CD4-positive, alpha-beta T cell (primary cell): ENCODE measurements at regions of chr1 and their contacts with region 1.

Region 1: DNA sequence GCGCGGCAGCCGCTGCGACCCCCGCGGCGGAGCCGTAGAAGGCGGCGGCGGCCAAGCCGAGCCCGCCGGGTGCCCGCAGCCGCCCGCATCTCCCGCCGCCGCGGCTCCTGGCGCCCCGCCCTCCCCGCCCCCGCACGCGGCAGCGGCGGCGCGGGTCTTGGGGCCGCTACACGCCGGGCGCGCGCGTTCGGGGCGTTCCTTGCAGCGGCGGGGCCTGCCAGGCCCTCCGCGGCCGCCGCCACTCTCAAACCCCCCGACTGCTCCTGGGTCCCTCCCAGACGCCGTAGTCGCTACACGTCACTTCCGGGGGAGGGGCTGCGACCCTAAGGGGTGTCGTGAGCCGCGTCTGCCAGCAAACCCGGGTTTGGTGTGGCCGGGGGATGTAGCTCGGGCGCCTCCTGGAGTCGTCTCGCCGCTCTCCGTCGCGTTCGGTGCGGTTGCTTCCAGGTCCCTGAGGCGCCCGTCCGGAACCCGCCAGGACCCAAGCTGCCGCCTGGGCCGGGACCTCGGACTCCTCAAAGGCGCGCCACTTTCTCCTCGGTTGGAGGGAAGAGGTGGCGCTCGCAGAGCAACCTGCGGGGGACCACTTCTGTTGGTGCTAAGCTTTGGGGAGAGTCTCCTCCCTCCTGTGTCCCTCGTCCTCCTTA is at the start of gene ELK4:
- DNase-seq: peak; percentile 99 to 100 (median 100)
- ATAC-seq: peak; percentile 79
- H3K4me3 ChIP-seq: peak within 1 kb of the TSS; percentile 81
- H3K4me3 Mint-ChIP-seq: peak within 1 kb of the TSS; percentile 94
- H3K27ac ChIP-seq: peak within 1 kb of the TSS; percentile 91 to 93
- H3K27ac Mint-ChIP-seq: peak within 1 kb of the TSS; percentile 91
- H3K4me1 ChIP-seq: peaks cover 29% of the 10 kb centered on the region
- H3K4me1 Mint-ChIP-seq: peaks cover 50% of the 10 kb centered on the region
- H3K27me3 ChIP-seq: no peaks in the 10 kb centered on the region
- H3K27me3 Mint-ChIP-seq: no peaks in the 10 kb centered on the region
- CTCF ChIP-seq: peak; percentile 75
- total RNA-seq, gene ELK4: 145 to 154 TPM

Region 2: GRCh38 chr1:205211169-205211838 is 420.5 kb before region 1 on chr1 and contains the start of gene DSTYK:
- CTCF ChIA-PET with region 1: no interaction called
- POLR2A ChIA-PET with region 1: no interaction called
- intact Hi-C with region 1: loop called in 1 of 2 experiments (anchors 10 kb)
- DNase-seq: peak; percentile 84 to 95 (median 88)
- ATAC-seq: peak; percentile 92
- H3K4me3 ChIP-seq: peak within 1 kb of the TSS; percentile 99
- H3K4me3 Mint-ChIP-seq: peak within 1 kb of the TSS; percentile 98
- H3K27ac ChIP-seq: peak within 1 kb of the TSS; percentile 67 to 80
- H3K27ac Mint-ChIP-seq: peak within 1 kb of the TSS; percentile 98
- H3K4me1 ChIP-seq: peaks cover 19% of the 10 kb centered on the region
- H3K4me1 Mint-ChIP-seq: peaks cover 57% of the 10 kb centered on the region
- H3K27me3 ChIP-seq: no peaks in the 10 kb centered on the region
- H3K27me3 Mint-ChIP-seq: peaks cover 5% of the 10 kb centered on the region
- CTCF ChIP-seq: no peak
- total RNA-seq, gene DSTYK: 13.9 to 15.3 TPM

Region 3: DNA sequence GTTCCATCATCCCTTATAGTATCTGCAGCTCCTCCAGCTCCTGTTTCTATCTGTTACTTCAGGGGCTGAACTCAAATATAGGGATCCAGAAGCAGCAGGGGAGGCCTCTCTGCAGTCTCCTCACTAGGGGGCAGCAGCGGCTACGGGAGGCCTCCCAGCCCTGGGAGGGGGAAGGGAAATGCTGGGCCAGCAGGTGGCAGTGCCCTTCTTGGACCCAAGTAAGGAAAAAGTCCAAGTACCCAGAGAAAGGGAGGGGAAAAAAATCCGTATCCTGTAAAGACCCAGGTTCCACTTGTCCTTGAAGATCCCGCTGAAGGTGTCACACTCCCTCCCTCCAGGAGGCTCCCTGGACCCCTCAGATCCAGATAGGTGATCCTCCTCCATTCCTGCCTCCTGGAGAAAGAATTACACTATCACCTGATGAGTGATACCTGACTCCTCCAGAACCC is 296.2 kb before region 1 on chr1:
- CTCF ChIA-PET with region 1: no interaction called
- POLR2A ChIA-PET with region 1: no interaction called
- intact Hi-C with region 1: loop called in 1 of 2 experiments (anchors 10 kb)
- DNase-seq: peak; percentile 63 to 89 (median 74)
- ATAC-seq: peak; percentile 99
- H3K4me3 ChIP-seq: no peak overlapping the region
- H3K4me3 Mint-ChIP-seq: no peak overlapping the region
- H3K27ac ChIP-seq: no peak overlapping the region
- H3K27ac Mint-ChIP-seq: no peak overlapping the region
- H3K4me1 ChIP-seq: no peaks in the 10 kb centered on the region
- H3K4me1 Mint-ChIP-seq: no peaks in the 10 kb centered on the region
- H3K27me3 ChIP-seq: no peaks in the 10 kb centered on the region
- H3K27me3 Mint-ChIP-seq: no peaks in the 10 kb centered on the region
- CTCF ChIP-seq: peak; percentile 93

Region 4: GRCh38 chr1:205591522-205592351 is 40.1 kb before region 1 on chr1:
- CTCF ChIA-PET with region 1: interaction called, 194 read pairs
- POLR2A ChIA-PET with region 1: interaction called, 360 read pairs
- intact Hi-C with region 1: loop called (anchors 1 kb)
- DNase-seq: peak; percentile 81 to 94 (median 88)
- ATAC-seq: peak; percentile 85
- H3K4me3 ChIP-seq: peak overlapping the region; percentile 50
- H3K4me3 Mint-ChIP-seq: peak overlapping the region; percentile 90
- H3K27ac ChIP-seq: peak overlapping the region; percentile 23 to 45
- H3K27ac Mint-ChIP-seq: peak overlapping the region; percentile 99
- H3K4me1 ChIP-seq: peaks cover 31% of the 10 kb centered on the region
- H3K4me1 Mint-ChIP-seq: peaks cover 50% of the 10 kb centered on the region
- H3K27me3 ChIP-seq: no peaks in the 10 kb centered on the region
- H3K27me3 Mint-ChIP-seq: no peaks in the 10 kb centered on the region
- CTCF ChIP-seq: peak; percentile 96

Region 5: DNA sequence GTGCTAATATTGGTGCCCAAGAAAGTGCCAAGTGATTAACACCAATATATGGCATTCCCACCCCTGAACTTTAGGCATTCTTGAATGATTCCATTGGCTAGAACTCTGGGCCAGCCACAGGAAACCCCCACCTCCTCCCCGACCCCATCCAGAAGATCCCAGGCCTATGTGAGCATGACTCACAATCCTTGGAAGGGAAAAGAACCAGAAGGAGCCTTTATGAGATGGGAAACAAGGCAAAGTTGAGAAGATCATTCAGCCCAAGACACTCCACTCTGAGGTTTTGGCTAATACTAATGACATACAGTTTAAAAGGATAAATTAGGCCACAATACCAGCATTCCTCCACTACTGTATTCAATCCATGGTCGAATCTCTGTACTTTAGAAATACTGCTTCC is 21.8 kb before region 1 on chr1:
- CTCF ChIA-PET with region 1: interaction called, 5 read pairs
- POLR2A ChIA-PET with region 1: interaction called, 13 read pairs
- intact Hi-C with region 1: loop called in 1 of 2 experiments (anchors 2 kb)
- DNase-seq: no peak
- ATAC-seq: no peak
- H3K4me3 ChIP-seq: no peak overlapping the region
- H3K4me3 Mint-ChIP-seq: no peak overlapping the region
- H3K27ac ChIP-seq: no peak overlapping the region
- H3K27ac Mint-ChIP-seq: peak overlapping the region; percentile 64
- H3K4me1 ChIP-seq: peaks cover 3% of the 10 kb centered on the region
- H3K4me1 Mint-ChIP-seq: peaks cover 61% of the 10 kb centered on the region
- H3K27me3 ChIP-seq: no peaks in the 10 kb centered on the region
- H3K27me3 Mint-ChIP-seq: no peaks in the 10 kb centered on the region
- CTCF ChIP-seq: no peak

Region 6: DNA sequence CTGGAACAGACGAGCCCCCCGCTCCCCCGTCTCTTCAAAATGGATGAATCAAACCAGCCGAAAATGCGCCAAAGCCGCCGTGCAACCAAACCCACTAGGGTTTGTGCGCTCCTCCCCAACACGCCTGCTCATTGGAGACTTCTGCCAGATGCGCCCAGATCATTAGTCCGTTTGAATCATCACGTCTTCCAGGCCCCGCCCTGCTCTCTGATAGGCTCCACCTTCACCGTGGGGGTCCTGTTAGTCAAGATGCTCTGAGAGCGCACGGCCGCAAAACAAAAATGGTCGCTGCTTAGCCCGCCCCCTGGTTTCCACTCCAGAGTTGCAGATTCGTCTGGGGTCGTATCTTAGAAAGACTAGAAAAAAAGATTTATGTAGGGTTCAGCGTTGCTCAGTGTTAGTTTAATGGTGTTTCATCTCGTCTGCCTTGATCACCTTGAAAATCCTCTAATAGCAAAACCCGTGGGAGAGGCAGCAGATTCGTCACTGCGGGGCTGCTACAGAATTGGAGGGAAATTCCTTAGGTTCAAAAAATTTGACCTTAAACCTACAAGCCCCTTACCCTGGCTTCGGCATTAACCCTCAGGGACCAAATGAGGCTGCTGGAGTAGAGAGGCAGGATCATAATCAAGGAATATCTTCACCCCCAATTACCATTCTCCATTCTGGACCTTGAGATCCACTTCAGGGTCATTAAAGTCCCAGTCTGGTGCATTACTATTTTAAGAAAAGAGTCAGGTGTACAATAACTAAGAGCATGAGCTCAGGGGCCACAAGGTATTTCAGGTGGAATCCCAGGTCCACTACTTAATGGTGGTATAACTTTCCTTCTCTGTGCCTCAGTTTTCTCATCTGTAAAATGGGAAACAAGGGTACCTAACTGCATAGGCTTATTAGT is 118.5 kb after region 1 on chr1 and contains the start of gene NUCKS1:
- CTCF ChIA-PET with region 1: no interaction called
- POLR2A ChIA-PET with region 1: interaction called, 29 read pairs
- intact Hi-C with region 1: loop called in 1 of 2 experiments (anchors 5 kb)
- DNase-seq: peak; percentile 93 to 99 (median 96)
- ATAC-seq: peak; percentile 79
- H3K4me3 ChIP-seq: peak within 1 kb of the TSS; percentile 71
- H3K4me3 Mint-ChIP-seq: peak within 1 kb of the TSS; percentile 99
- H3K27ac ChIP-seq: peak within 1 kb of the TSS; percentile 75 to 80
- H3K27ac Mint-ChIP-seq: peak within 1 kb of the TSS; percentile 93
- H3K4me1 ChIP-seq: peaks cover 8% of the 10 kb centered on the region
- H3K4me1 Mint-ChIP-seq: peaks cover 39% of the 10 kb centered on the region
- H3K27me3 ChIP-seq: no peaks in the 10 kb centered on the region
- H3K27me3 Mint-ChIP-seq: no peaks in the 10 kb centered on the region
- CTCF ChIP-seq: no peak
- total RNA-seq, gene NUCKS1: 80.6 to 84.7 TPM

Region 7: DNA sequence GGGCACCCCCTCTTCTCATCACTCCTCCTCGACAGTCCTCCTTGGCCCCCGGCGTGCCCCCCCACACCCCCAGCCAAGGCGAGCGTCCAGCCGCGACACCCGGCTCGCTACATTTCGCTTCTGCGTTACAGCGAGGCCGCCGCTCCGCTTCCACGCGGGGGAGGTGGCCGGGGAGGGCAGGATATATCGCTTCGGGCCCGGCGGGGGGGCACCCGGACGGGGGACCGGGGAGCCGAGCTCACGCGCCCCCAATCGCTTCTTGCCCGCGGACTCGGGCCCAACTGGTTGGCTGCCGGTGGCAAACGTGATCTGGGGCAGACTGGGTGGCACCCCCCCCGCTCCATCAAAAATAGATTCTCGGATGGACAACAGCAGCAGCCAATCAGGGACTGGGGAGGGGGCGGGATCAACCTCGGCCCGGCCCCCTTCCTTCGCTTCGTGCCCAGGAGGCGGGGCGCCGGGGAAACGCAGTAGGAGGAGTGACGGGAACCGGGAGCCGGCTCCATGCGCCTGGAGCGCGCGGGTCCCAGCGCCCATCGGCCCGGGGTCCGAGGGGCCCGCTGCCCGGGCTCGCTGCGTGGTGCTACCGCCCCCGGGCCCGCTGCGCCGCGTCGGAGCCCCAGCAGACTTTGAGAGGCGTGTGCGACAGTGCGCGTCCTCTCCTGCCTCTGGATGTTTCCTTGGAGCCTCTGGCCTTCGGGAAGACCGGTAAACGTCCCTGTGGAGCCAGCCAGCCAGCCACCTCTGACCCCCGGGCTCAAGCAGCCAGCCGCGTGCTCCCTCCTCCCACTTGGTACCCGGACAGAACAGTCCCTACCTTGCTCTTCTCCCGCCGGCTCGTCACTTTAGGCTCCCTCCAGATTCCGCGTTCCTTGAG is 181.3 kb after region 1 on chr1 and contains the start of gene SLC41A1:
- CTCF ChIA-PET with region 1: no interaction called
- POLR2A ChIA-PET with region 1: no interaction called
- intact Hi-C with region 1: loop called in 1 of 2 experiments (anchors 2 kb)
- DNase-seq: peak; percentile 85 to 97 (median 90)
- ATAC-seq: peak; percentile 95
- H3K4me3 ChIP-seq: peak within 1 kb of the TSS; percentile 97
- H3K4me3 Mint-ChIP-seq: peak within 1 kb of the TSS; percentile 97
- H3K27ac ChIP-seq: peak within 1 kb of the TSS; percentile 19 to 60
- H3K27ac Mint-ChIP-seq: peak within 1 kb of the TSS; percentile 85
- H3K4me1 ChIP-seq: peaks cover 53% of the 10 kb centered on the region
- H3K4me1 Mint-ChIP-seq: peaks cover 60% of the 10 kb centered on the region
- H3K27me3 ChIP-seq: no peaks in the 10 kb centered on the region
- H3K27me3 Mint-ChIP-seq: no peaks in the 10 kb centered on the region
- CTCF ChIP-seq: no peak
- total RNA-seq, gene SLC41A1: 23.8 to 26.4 TPM